ENCODE measurements at regions of chr20 and their contacts with region 1.

Region 1: GRCh38 chr20:3563548-3564177 is 92.8 kb downstream of the ATRN start:
- DNase-seq: peak in 6 of 9 donors; percentile 13 to 38 (median 20)
- ATAC-seq: no peak
- H3K4me3 ChIP-seq: no peak overlapping the region
- H3K4me3 Mint-ChIP-seq: no peak overlapping the region
- H3K27ac ChIP-seq: no peak overlapping the region
- H3K27ac Mint-ChIP-seq: no peak overlapping the region
- H3K4me1 ChIP-seq: no peaks in the 10 kb centered on the region
- H3K4me1 Mint-ChIP-seq: no peaks in the 10 kb centered on the region
- H3K27me3 ChIP-seq: no peaks in the 10 kb centered on the region
- H3K27me3 Mint-ChIP-seq: no peaks in the 10 kb centered on the region

Region 2: DNA sequence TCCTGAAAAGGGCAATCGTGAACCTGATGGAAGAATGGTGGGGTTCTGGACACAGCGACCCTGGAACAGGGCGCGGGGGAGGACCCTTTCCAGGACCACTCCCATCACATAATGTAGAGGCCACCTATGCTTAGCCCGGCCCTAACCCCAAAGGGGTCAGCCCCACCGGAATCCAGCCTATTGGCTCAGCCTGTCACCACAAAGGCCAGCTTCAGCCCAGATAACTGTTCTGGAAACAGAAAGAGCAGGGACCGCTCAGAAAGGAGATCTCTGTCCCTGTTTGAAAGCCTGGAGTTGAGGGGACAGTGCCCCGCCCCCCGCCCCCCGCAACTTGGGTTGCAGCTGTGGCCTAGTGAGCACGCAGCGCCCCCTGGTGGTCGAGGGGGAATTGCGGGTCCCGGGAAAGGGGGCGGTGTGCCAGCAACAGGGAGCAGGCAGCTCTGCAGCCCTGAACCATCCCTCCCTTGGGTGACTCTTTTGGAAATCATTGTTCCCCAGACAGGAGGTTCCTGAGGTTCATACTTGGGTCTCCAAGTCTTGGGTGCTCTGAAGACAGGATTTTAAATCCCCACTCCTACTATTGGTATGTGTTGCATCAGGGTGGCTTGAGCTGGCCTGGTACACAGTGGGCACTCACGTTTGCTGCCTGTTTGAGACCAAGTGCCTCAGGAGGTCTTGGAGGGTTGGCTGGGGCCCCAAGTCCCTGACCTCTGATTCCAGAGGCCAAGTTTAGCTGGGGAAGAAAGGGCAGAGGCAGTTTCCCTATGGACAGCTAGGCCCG is 147.2 kb after region 1 on chr20:
- CTCF ChIA-PET with region 1: no interaction called
- POLR2A ChIA-PET with region 1: no interaction called
- intact Hi-C with region 1: loop called in 1 of 2 experiments (anchors 2 kb)
- DNase-seq: peak; percentile 43 to 86 (median 61)
- ATAC-seq: peak; percentile 62
- H3K4me3 ChIP-seq: no peak overlapping the region
- H3K4me3 Mint-ChIP-seq: no peak overlapping the region
- H3K27ac ChIP-seq: no peak overlapping the region
- H3K27ac Mint-ChIP-seq: no peak overlapping the region
- H3K4me1 ChIP-seq: no peaks in the 10 kb centered on the region
- H3K4me1 Mint-ChIP-seq: peaks cover 0 to 3% (median 0%) of the 10 kb centered on the region in 7 donors
- H3K27me3 ChIP-seq: no peaks in the 10 kb centered on the region
- H3K27me3 Mint-ChIP-seq: peaks cover 6 to 10% (median 7%) of the 10 kb centered on the region in 5 donors

Region 3: GRCh38 chr20:4091490-4092479 is 528.1 kb after region 1 on chr20:
- CTCF ChIA-PET with region 1: no interaction called
- POLR2A ChIA-PET with region 1: no interaction called
- intact Hi-C with region 1: loop called in 1 of 2 experiments (anchors 5 kb)
- DNase-seq: peak in 6 of 9 donors; percentile 6 to 62 (median 18)
- ATAC-seq: peak; percentile 51
- H3K4me3 ChIP-seq: no peak overlapping the region
- H3K4me3 Mint-ChIP-seq: no peak overlapping the region
- H3K27ac ChIP-seq: no peak overlapping the region
- H3K27ac Mint-ChIP-seq: peak overlapping the region in 1 of 9 donors; percentile 37
- H3K4me1 ChIP-seq: no peaks in the 10 kb centered on the region
- H3K4me1 Mint-ChIP-seq: peaks cover 0 to 5% (median 0%) of the 10 kb centered on the region in 7 donors
- H3K27me3 ChIP-seq: no peaks in the 10 kb centered on the region
- H3K27me3 Mint-ChIP-seq: peaks cover 9 to 23% (median 11%) of the 10 kb centered on the region in 5 donors

Measured in naive thymus-derived CD4-positive, alpha-beta T cell (primary cell).